ENCODE measurements at regions of chr20 and their contacts with region 1.

Region 1: GRCh38 chr20:63446216-63447024 is 26.0 kb downstream of the KCNQ2 start:
- DNase-seq: no peak
- H3K4me3 Mint-ChIP-seq: no peak overlapping the region
- H3K27ac Mint-ChIP-seq: no peak overlapping the region
- H3K4me1 Mint-ChIP-seq: peaks cover 9% of the 10 kb centered on the region
- H3K27me3 Mint-ChIP-seq: no peaks in the 10 kb centered on the region

Region 2: DNA sequence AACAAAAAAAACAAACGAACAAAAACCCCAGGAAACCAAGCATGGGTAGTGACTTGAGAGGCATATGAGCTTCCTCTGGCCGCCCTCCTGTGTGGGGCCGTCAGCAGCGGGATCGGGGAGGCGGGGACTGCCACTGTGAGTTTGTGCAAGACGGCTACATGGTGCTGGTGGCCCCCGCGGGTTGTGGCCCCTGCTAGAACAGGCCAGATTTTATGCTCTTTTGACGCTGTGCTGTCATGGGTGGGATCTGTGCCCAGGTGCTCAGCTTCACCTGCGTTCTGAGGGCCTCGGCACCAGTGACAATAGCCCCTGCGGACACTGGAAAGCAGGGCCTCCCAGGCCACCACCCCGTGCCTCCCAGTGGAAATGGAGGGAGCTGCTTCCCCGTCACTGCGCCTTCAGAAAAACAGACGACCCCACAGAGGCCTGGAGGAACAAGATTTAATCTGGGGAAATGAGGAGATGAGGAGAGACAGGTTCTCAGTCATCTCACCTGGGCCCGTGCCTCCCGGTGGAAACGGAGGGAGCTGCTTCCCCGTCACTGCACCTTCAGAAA is 30.7 kb after region 1 on chr20:
- CTCF ChIA-PET with region 1: no interaction called
- POLR2A ChIA-PET with region 1: interaction called, 13 read pairs
- DNase-seq: no peak
- H3K4me3 Mint-ChIP-seq: no peak overlapping the region
- H3K27ac Mint-ChIP-seq: no peak overlapping the region
- H3K4me1 Mint-ChIP-seq: no peaks in the 10 kb centered on the region
- H3K27me3 Mint-ChIP-seq: peaks cover 21% of the 10 kb centered on the region

Measured in activated CD4-positive, alpha-beta T cell treated with anti-CD3 and anti-CD28 coated beads, Interleukin-2, amount 10 ng/mL, durations not matched to agents 7 days and 5 days (primary cell).